ENCODE measurements at regions of chr7 and their contacts with region 1.

Region 1: DNA sequence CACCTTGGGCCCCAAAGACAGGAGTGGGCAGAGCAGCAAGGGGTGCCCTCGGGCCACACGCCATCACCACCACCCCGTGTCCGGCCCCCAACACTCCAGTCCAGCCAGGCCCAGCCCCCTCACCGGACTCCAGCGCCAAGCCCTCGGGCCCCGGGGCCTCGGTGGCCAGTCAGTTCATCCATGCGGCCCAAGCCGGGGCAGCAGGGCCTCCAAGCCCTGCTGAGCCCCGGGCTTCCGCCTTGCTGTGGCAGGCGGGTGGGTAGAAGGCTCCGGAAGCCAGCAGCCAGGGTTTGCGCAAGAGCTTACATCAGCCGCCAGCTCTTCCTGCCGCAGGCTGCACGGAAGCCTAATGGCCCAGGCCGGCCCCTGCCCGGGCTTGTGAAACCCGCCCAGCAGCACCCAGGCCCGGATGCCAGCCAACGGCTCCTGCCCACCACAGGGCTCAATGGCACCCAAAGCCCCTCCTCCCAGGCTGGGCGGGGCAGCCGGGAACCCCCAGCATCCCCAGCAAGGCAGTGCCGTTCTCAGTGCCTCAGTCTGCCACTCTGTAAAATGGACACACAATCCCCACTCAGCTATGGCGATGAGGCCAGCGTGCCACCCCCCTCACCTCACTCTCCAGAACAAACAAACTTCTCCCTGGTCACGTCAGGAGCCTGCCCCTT is 26.5 kb downstream of the TNRC18 start:
- DNase-seq: peak; percentile 99 to 100 (median 99)
- H3K4me3 ChIP-seq: peak overlapping the region in 6 of 7 experiments; percentile 39 to 88 (median 70)
- H3K27ac ChIP-seq: peak overlapping the region; percentile 97 to 98
- H3K4me1 ChIP-seq: peaks cover 0 to 47% (median 42%) of the 10 kb centered on the region in 4 experiments
- H3K27me3 ChIP-seq: no peaks in the 10 kb centered on the region

Region 2: GRCh38 chr7:5363729-5364128 is 33.4 kb before region 1 on chr7:
- CTCF ChIA-PET with region 1: interaction called, 10 read pairs
- POLR2A ChIA-PET with region 1: no interaction called
- DNase-seq: no peak
- H3K4me3 ChIP-seq: peak overlapping the region in 1 of 7 experiments; percentile 11
- H3K27ac ChIP-seq: peak overlapping the region in 1 of 2 experiments; percentile 34
- H3K4me1 ChIP-seq: peaks cover 0 to 27% (median 22%) of the 10 kb centered on the region in 4 experiments
- H3K27me3 ChIP-seq: no peaks in the 10 kb centered on the region

Region 3: GRCh38 chr7:5382281-5382892 is 14.7 kb before region 1 on chr7:
- CTCF ChIA-PET with region 1: interaction called, 16 read pairs
- POLR2A ChIA-PET with region 1: interaction called, 3 read pairs
- DNase-seq: peak; percentile 25 to 67 (median 67)
- H3K4me3 ChIP-seq: peak overlapping the region in 2 of 7 experiments; percentile 2 to 7
- H3K27ac ChIP-seq: peak overlapping the region in 1 of 2 experiments; percentile 70
- H3K4me1 ChIP-seq: peaks cover 0 to 30% (median 21%) of the 10 kb centered on the region in 4 experiments
- H3K27me3 ChIP-seq: no peaks in the 10 kb centered on the region

Region 4: DNA sequence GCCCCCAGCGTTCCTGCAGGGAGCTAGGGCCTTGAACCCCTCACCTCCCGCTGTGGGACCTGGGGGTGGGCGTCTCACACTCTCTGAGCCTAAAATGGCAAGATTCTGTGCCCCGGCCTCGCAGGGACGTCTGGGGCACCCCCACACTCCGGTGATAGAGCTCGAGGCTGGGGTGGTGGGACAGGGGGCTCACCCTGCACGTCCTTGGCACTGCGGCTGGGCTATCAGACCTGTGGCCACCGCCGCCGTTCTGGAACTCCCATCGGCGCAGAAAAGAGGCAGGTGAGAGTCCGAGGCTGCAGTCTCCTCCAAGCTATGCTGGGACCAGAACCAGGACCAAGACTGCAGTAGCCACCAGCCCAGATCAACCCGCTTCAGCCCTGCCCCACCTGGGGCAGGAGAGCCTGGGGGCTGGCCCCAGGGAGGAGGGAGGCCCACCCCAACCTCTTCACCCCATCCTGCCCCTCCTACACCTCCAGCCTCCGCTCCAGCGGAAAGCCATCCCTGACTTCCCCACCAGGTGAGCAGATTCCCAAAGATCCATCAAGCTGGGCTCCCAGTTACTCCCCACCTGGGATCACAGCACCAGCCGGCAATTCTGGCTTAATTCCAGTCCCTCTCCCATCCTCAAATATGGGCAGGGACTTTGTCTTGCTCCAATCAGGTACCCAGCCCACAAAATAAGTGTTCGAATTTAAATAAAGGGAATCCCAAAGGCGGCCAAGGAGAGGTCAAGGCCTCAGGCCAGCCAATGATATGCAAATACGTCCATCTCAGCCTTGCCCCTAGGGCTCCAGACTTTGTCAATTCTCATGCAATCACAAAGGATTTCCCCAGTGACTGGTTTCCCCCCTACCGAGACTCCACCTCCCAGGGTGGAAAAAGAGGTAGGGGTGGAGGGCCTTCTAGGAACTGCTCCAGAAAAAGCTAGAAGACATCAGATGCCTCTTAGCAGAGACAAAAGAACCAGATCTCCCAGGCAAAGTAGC is 10.1 kb after region 1 on chr7:
- CTCF ChIA-PET with region 1: interaction called, 22 read pairs
- POLR2A ChIA-PET with region 1: interaction called, 4 read pairs
- DNase-seq: no peak
- H3K4me3 ChIP-seq: no peak overlapping the region
- H3K27ac ChIP-seq: peak overlapping the region in 1 of 2 experiments; percentile 55
- H3K4me1 ChIP-seq: peaks cover 0 to 7% (median 4%) of the 10 kb centered on the region in 4 experiments
- H3K27me3 ChIP-seq: no peaks in the 10 kb centered on the region

Region 5: DNA sequence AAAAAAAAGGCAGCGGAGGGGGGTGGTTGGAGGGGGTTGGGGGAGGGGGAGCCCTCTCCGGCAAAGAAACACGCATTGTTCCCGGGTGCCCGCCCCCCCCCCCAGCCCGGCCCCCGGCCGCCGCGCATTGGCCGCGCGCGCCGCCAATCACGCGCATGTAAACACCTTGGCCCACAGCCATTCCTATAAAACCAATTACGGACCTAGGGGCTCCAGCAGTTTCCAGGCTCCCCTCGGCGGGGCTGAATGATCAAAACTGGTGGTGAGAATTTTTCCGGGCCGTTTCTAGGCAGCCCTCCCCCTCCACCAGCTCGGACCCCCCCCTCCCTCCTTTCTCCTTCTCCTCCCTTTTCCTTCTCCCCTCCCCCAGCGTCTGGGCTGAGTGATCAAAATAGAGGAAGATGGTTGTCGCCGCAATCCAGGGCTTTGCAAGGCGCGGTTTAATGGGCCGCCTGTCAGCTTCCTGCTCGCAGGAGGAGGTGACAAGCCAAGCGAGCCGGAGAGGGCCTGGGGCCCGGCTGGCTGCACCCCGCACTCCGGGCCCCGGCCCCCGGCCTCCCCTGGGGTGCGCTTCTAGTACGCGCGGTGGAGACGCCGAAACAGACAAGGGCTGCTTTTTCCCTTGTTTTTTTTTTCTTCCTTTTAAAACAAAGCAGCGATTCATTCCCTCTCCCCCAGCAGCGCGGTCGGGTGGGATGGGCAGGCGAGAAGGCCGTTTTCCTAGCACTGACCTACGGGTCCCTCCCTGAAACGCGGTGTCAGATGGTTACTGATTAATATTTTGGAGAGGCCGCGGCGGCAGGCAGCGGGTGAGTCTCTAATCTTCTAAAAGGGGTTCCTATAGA is 26.9 kb after region 1 on chr7:
- CTCF ChIA-PET with region 1: interaction called, 3 read pairs
- POLR2A ChIA-PET with region 1: interaction called, 19 read pairs
- DNase-seq: peak; percentile 99 to 100 (median 99)
- H3K4me3 ChIP-seq: peak overlapping the region; percentile 91 to 100 (median 95)
- H3K27ac ChIP-seq: peak overlapping the region; percentile 91 to 98
- H3K4me1 ChIP-seq: peaks cover 0 to 25% (median 16%) of the 10 kb centered on the region in 4 experiments
- H3K27me3 ChIP-seq: no peaks in the 10 kb centered on the region

Region 6: GRCh38 chr7:5450549-5451372 is 53.6 kb after region 1 on chr7:
- CTCF ChIA-PET with region 1: interaction called, 34 read pairs
- POLR2A ChIA-PET with region 1: interaction called, 3 read pairs
- DNase-seq: peak; percentile 71 to 86 (median 85)
- H3K4me3 ChIP-seq: peak overlapping the region in 2 of 7 experiments; percentile 28 to 37
- H3K27ac ChIP-seq: peak overlapping the region in 1 of 2 experiments; percentile 34
- H3K4me1 ChIP-seq: peaks cover 0 to 60% (median 45%) of the 10 kb centered on the region in 4 experiments
- H3K27me3 ChIP-seq: no peaks in the 10 kb centered on the region

Region 7: GRCh38 chr7:5477723-5478531 is 80.8 kb after region 1 on chr7:
- CTCF ChIA-PET with region 1: interaction called, 11 read pairs
- POLR2A ChIA-PET with region 1: interaction called, 4 read pairs
- DNase-seq: peak; percentile 72 to 85 (median 81)
- H3K4me3 ChIP-seq: peak overlapping the region; percentile 17 to 69 (median 61)
- H3K27ac ChIP-seq: peak overlapping the region; percentile 75 to 82
- H3K4me1 ChIP-seq: peaks cover 0 to 48% (median 41%) of the 10 kb centered on the region in 4 experiments
- H3K27me3 ChIP-seq: no peaks in the 10 kb centered on the region

Region 8: DNA sequence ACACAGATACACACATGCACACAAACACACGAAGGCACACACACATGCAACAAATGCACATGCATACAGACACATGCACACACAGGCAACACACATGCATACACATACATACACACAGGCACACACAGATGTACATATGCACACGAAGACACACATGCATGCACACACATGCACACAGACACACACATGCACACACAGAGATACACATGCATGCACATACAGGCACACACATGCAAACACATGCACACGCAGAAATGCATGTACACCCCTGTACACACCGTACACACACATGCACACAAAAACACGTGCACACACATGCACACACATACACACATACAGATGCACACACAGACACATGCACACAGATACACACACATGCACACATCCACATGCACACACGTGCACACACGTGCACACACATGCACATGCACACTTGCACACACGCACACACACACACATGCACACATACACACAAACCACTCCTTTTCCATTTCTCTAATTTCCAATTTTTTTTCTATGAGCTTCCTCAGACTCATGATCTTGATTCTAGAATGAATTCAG is 1492.2 kb after region 1 on chr7:
- CTCF ChIA-PET with region 1: no interaction called
- POLR2A ChIA-PET with region 1: no interaction called
- DNase-seq: no peak
- H3K4me3 ChIP-seq: no peak overlapping the region
- H3K27ac ChIP-seq: no peak overlapping the region
- H3K4me1 ChIP-seq: no peaks in the 10 kb centered on the region
- H3K27me3 ChIP-seq: no peaks in the 10 kb centered on the region